Sigmoid colon (tissue), 7 donors: ENCODE measurements at regions of chr1 and their contacts with region 1.

Region 1: DNA sequence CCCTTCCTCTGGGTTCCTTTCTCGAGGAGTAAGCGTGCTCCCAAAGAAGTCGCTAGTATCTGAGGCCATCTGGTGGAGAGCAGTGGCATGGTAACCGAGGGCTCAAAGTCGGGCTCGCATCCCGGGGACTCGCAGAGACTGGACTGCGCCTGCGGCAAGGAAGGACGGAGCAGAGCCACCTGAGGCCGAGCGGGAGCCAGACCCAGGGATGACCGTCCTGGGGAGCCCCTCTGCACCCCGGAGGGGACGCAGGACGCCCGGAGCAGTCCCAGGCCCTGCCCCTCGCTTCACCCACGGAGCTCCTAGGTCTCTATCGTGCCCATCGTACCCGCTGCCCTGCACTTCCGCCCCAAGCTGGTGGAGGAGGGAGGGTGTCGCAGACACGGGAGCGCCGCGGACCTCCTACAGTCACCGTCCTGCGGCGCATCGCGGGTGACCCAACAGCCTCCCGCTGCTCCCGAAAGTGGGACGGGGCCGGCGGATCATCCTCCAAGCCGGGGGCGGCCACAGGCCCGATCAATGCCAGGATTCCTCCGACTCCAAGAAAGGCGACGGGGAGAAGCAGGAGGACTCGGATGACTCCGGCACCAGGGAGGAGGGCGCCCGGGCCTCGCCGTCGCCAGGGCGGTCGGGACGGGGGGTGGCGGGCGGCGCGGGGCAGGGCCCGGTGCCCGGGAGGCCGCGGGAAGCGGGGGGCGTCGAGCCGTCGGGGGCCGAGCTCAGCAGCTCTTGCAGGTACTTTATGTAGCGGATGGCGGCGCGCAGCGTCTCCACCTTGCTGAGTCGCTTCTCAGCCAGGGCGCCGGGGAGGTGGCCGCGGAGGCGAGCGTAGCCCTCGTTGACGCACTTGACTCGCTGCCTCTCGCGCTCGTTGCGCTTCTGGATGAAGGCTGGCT is 2.3 kb upstream of the CACNA1S start:
- DNase-seq: peak; percentile 94
- H3K4me3 ChIP-seq: peak overlapping the region; percentile 36 to 63 (median 52)
- H3K27ac ChIP-seq: peak overlapping the region in 3 of 4 donors; percentile 25 to 59 (median 39)
- H3K4me1 ChIP-seq: peaks cover 0 to 14% (median 10%) of the 10 kb centered on the region in 4 donors
- H3K27me3 ChIP-seq: peaks cover 5 to 7% (median 5%) of the 10 kb centered on the region in 3 donors
- CTCF ChIP-seq: peak; percentile 81 to 91 (median 86)
- EP300 ChIP-seq: no peak
- POLR2A ChIP-seq: no peak

Region 2: DNA sequence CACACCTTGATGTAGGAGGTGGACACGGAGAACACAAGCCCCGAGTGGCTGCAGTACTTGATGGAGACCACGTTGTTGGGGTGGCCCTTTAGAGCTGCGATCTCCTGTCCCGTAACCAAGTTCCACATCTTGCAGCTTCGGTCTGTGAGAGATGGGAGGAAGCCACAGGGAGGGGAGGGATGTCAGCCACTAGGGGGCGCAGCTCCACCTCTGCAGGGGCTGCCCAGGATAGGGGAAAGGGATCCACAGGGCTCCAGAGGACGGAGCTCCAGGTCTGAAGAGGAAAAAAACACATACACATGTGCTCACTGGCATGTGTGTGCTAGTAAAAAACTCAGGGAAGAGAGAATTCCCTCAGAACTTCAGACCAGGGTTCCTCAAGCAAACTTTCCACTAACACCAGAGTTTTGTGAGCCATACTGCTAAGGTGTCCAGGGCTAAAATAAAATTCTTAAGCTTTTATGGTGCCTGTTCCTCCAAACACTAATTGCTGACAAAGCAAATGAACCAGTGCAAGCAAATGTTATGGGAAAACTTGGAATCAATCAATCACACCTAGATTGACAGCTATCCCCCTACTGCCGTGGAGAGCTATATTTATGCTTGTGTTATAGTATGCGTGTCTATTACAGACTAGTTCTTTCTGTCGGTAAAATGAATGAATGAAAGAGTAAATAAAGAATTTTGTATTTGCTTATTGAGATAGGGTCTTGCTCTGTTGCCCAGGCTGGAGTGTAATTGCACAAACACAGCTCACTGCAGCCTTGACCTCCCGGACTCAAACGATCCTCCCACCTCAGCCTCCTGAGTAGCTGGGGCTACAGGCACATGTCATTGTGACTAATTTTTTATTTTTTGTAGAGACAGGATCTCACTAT is 134.7 kb before region 1 on chr1:
- intact Hi-C with region 1: no loop called
- DNase-seq: no peak
- H3K4me3 ChIP-seq: no peak overlapping the region
- H3K27ac ChIP-seq: no peak overlapping the region
- H3K4me1 ChIP-seq: no peaks in the 10 kb centered on the region
- H3K27me3 ChIP-seq: no peaks in the 10 kb centered on the region
- CTCF ChIP-seq: no peak
- EP300 ChIP-seq: no peak
- POLR2A ChIP-seq: no peak

Region 3: DNA sequence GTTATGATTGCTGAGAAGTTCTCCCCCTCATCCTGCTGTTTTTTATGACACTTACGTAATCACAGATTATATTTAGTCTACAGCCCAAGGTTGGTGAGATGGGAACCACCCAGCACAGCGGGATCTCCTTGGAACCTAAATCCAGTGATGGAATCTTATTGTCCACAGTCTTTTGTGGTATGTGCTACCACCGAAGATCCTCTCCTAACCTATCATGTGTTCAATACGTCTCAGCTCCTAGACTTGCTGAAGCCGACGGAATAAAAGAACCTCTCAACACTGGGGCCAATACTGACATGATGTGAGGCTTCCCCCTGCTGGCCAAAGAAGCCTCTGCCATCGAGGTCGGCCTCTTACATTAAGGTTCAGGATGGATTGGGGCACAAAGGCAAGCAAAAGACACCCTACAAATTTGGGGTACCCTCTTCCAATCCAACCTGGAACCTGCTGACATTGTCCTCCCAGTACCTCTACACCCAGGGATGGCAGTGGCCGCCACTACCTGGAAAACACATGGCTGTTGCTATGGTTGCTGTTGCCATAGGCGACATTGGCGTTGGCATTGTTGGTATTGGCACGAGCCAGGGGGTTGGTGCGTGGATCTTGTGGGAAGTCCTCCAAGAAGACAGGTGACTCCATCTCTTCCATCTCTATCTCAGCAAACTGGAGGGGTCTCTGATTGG is 71.6 kb before region 1 on chr1:
- intact Hi-C with region 1: loop called (anchors 5 kb)
- DNase-seq: no peak
- H3K4me3 ChIP-seq: no peak overlapping the region
- H3K27ac ChIP-seq: no peak overlapping the region
- H3K4me1 ChIP-seq: peaks cover 0 to 9% (median 4%) of the 10 kb centered on the region in 4 donors
- H3K27me3 ChIP-seq: no peaks in the 10 kb centered on the region
- CTCF ChIP-seq: peak; percentile 39 to 85 (median 74)
- EP300 ChIP-seq: no peak
- POLR2A ChIP-seq: no peak

Region 4: GRCh38 chr1:201085916-201086735 is 28.4 kb before region 1 on chr1:
- intact Hi-C with region 1: loop called (anchors 2 kb)
- DNase-seq: no peak
- H3K4me3 ChIP-seq: no peak overlapping the region
- H3K27ac ChIP-seq: no peak overlapping the region
- H3K4me1 ChIP-seq: no peaks in the 10 kb centered on the region
- H3K27me3 ChIP-seq: no peaks in the 10 kb centered on the region
- CTCF ChIP-seq: peak in 2 of 4 experiments; percentile 16 to 46
- EP300 ChIP-seq: no peak
- POLR2A ChIP-seq: no peak

Region 5: GRCh38 chr1:201282931-201283829 is 168.7 kb after region 1 on chr1 and contains the start of gene PKP1:
- intact Hi-C with region 1: no loop called
- DNase-seq: peak; percentile 58
- H3K4me3 ChIP-seq: peak within 1 kb of the TSS in 2 of 4 donors; percentile 17 to 26
- H3K27ac ChIP-seq: no peak within 1 kb of the TSS
- H3K4me1 ChIP-seq: peaks cover 0 to 12% (median 10%) of the 10 kb centered on the region in 4 donors
- H3K27me3 ChIP-seq: peaks cover 8 to 56% (median 21%) of the 10 kb centered on the region in 3 donors
- CTCF ChIP-seq: no peak
- EP300 ChIP-seq: no peak
- POLR2A ChIP-seq: no peak
- total RNA-seq, gene PKP1: under 0.01 to 0.16 TPM in 2 of 4 donors, not detected in the others